SK-N-SH (cell line): ENCODE measurements at regions of chr12 and their contacts with region 1.

Region 1: GRCh38 chr12:55797068-55797467 is 20.5 kb downstream of the SARNP start:
- DNase-seq: peak; percentile 68
- H3K4me3 ChIP-seq: no peak overlapping the region; a peak in 1 of 4 replicates
- H3K27ac ChIP-seq: no peak overlapping the region
- H3K4me1 ChIP-seq: no peaks in the 10 kb centered on the region
- H3K27me3 ChIP-seq: no peaks in the 10 kb centered on the region
- CTCF ChIP-seq: peak; percentile 68
- EP300 ChIP-seq: no peak
- RAD21 ChIP-seq: peak; percentile 80

Region 2: DNA sequence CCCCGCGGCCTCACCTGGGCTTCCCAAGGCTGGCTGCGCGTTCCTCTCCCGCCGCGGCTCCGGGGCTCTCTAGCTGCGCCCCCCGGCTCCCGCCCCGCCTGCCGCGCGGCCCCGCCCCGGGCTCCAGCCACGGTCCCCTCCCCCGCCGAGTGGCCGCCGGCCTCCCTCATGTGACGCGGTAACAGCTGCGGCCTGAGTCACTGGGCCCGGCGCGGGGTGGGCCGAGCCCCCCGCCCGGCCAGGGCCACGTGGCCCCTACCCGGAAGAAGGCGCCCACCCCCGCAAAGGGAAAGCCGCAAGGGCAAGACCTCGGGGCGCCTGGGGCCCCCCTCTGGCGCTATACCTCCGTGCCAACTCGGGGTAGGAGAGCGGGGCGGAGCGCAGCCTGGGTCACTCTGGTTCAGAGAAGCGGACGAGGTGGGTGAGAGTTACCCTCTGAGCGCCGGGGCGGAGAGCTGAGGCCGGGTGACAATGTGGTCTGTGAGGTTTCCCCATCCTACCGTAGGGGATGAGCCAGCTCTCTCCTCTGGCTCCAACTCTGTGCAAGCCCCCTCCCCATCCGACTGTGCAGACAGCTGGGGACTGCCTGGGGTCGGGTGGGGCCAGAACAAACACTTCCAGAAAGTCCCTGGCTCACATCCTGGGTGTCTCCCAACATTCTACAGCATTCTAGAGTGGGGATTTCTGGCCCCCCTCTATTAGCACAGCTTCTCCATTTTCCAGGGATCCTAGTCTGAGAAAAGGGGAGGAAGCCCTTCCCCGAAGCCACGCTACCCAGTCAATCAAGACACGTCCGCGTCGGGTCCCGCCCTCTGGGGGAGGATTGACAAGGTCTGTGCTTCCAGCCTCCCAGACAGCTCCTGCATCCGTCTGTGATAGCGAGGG is 67.9 kb before region 1 on chr12 and contains the start of gene CD63:
- CTCF ChIA-PET with region 1: interaction called, 358 read pairs
- POLR2A ChIA-PET with region 1: no interaction called
- DNase-seq: peak; percentile 93
- H3K4me3 ChIP-seq: peak within 1 kb of the TSS; percentile 74 to 97
- H3K27ac ChIP-seq: peak within 1 kb of the TSS; percentile 97 to 100
- H3K4me1 ChIP-seq: peaks cover 0 to 26% of the 10 kb centered on the region in 2 experiments; a peak in 1 of 4 replicates
- H3K27me3 ChIP-seq: no peaks in the 10 kb centered on the region
- CTCF ChIP-seq: no peak
- EP300 ChIP-seq: peak in 1 of 2 experiments; percentile 6; a peak in 1 of 4 replicates
- RAD21 ChIP-seq: no peak
- polyA plus RNA-seq, gene CD63: 1,022 and 1,465 TPM in 2 replicates

Region 3: GRCh38 chr12:55745361-55746146 is 51.5 kb before region 1 on chr12:
- CTCF ChIA-PET with region 1: interaction called, 358 read pairs
- POLR2A ChIA-PET with region 1: no interaction called
- DNase-seq: peak; percentile 79
- H3K4me3 ChIP-seq: peak overlapping the region; percentile 26 to 79; a peak in 3 of 4 replicates
- H3K27ac ChIP-seq: peak overlapping the region; percentile 14 to 76; a peak in 3 of 4 replicates
- H3K4me1 ChIP-seq: peaks cover 5 to 33% of the 10 kb centered on the region in 2 experiments; a peak in 3 of 4 replicates
- H3K27me3 ChIP-seq: no peaks in the 10 kb centered on the region
- CTCF ChIP-seq: no peak
- EP300 ChIP-seq: no peak
- RAD21 ChIP-seq: no peak

Region 4: DNA sequence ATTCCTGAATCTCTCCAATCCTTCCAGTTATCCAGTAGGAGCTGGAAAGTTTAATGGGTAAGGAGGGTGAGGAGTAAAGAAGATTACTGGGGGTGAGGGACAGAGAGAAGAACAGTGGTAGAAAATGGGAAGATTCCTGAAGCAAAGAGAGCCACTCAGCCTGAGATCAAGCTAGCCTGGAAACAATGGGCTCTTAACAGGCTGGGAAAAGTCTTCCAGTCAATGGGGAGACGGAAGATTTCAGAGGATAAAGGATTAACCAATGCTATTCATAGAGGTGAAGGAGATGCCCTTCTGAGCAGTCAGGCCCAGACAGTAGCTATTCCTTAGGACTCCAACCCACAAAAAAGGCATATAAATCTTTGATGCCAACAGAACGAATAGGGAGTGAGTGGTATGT is 39.4 kb before region 1 on chr12:
- CTCF ChIA-PET with region 1: interaction called, 13 read pairs
- POLR2A ChIA-PET with region 1: no interaction called
- DNase-seq: no peak
- H3K4me3 ChIP-seq: no peak overlapping the region
- H3K27ac ChIP-seq: no peak overlapping the region
- H3K4me1 ChIP-seq: no peaks in the 10 kb centered on the region
- H3K27me3 ChIP-seq: no peaks in the 10 kb centered on the region
- CTCF ChIP-seq: no peak
- EP300 ChIP-seq: no peak
- RAD21 ChIP-seq: no peak

Region 5: GRCh38 chr12:55812088-55812487 is 15.0 kb after region 1 on chr12:
- CTCF ChIA-PET with region 1: interaction called, 14 read pairs
- POLR2A ChIA-PET with region 1: no interaction called
- DNase-seq: no peak
- H3K4me3 ChIP-seq: no peak overlapping the region
- H3K27ac ChIP-seq: no peak overlapping the region
- H3K4me1 ChIP-seq: peaks cover 0 to 8% of the 10 kb centered on the region in 2 experiments
- H3K27me3 ChIP-seq: no peaks in the 10 kb centered on the region
- CTCF ChIP-seq: no peak
- EP300 ChIP-seq: no peak
- RAD21 ChIP-seq: no peak